MCF 10A (cell line): ENCODE measurements at regions of chr2 and their contacts with region 1.

Region 1: DNA sequence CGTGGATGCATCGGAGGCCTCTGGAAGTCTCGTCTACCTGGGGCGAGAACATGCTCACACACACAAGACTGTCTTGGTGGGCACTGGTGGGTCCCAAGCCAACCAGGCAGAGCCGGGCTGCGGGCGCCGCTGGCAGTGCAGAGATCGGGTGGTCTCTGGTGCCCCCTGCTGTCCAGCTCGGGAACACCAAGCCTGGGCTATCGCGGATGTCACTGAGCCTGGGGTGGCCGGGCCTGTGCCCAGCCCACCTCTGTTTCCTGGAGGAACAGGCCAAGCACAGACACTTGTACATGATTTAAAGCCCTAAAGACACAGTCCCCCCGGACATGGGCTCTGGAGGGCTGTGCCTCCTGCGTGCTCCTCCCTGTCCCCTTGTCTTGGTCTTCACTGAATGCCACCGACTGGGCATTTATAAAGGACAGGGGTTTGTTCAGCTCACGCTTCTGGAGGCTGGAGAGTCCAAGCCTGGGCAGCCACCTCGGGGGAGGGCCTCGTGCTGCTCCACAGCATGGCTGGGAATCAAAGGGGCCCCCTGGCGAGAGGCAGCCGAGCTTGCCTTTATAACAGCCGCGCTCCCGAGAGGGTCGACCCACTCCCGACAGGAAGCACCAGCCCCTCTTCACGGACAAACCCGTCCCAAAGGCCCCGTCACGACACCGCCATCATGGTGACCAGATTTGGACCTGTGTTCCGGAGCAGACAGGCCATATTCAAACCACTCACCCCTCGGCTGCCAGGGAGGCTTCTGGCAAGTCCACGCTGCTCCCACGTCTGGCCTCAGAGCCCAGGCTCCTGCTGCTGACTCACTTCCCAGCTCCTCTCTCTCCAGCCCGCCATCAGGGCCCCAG is 3.6 kb upstream of the OTOS start:
- DNase-seq: peak; percentile 50
- H3K4me3 Mint-ChIP-seq: no peak overlapping the region
- H3K27ac Mint-ChIP-seq: no peak overlapping the region
- H3K4me1 Mint-ChIP-seq: no peaks in the 10 kb centered on the region
- H3K27me3 Mint-ChIP-seq: peaks cover 24% of the 10 kb centered on the region
- CTCF ChIP-seq: peak; percentile 95

Region 2: DNA sequence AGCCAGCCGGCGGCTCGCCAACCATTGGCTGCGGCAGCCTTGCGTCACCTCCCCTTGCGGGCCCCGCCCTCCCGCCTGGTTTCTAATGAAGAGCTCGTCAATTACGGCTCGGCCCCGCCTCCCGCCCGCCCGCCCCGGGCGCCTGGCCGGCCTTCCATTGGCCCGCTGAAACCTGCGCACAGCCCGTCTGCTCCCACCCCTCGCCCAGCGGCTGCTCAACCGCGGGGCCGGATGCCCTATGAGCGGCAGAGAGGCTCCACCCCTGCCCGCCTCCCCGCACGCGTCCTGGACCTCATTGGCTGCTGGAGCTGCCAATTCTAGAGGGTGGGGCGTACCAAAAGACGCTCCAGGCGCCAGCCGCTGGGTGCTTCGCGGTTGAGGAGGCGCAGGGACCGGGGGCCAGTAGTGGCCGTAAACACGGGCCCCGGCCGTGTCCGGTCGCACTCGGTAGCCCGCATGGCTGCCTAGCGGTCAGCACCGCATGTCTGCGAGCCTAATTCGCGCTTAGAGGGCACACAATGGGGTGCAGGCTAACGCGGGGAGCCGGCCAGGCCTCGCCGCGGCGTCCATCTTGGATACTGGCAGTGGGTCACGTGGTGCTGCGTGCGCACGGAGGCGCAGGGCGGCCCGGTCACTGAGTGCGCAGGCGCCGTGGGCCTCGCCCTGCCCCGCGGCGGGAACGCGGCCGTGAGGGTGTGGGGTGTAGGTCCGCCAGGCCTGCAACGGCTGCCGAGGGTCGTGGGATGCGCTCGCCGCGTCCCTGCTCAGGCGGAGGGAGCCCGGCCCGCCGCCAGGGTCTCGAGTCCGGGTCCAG is 742.8 kb before region 1 on chr2:
- CTCF ChIA-PET with region 1: no interaction called
- POLR2A ChIA-PET with region 1: no interaction called
- intact Hi-C with region 1: no loop called
- DNase-seq: peak; percentile 98
- H3K4me3 Mint-ChIP-seq: peak overlapping the region; percentile 83
- H3K27ac Mint-ChIP-seq: peak overlapping the region; percentile 100
- H3K4me1 Mint-ChIP-seq: peaks cover 12% of the 10 kb centered on the region
- H3K27me3 Mint-ChIP-seq: no peaks in the 10 kb centered on the region
- CTCF ChIP-seq: no peak

Region 3: GRCh38 chr2:240060977-240061591 is 82.9 kb before region 1 on chr2:
- CTCF ChIA-PET with region 1: interaction called, 201 read pairs
- POLR2A ChIA-PET with region 1: interaction called, 10 read pairs
- intact Hi-C with region 1: loop called (anchors 1 kb)
- DNase-seq: peak; percentile 68
- H3K4me3 Mint-ChIP-seq: no peak overlapping the region
- H3K27ac Mint-ChIP-seq: no peak overlapping the region
- H3K4me1 Mint-ChIP-seq: no peaks in the 10 kb centered on the region
- H3K27me3 Mint-ChIP-seq: peaks cover 100% of the 10 kb centered on the region
- CTCF ChIP-seq: peak; percentile 66

Region 4: GRCh38 chr2:240069853-240070252 is 74.2 kb before region 1 on chr2:
- CTCF ChIA-PET with region 1: interaction called, 17 read pairs
- POLR2A ChIA-PET with region 1: no interaction called
- intact Hi-C with region 1: no loop called
- DNase-seq: peak; percentile 65
- H3K4me3 Mint-ChIP-seq: no peak overlapping the region
- H3K27ac Mint-ChIP-seq: no peak overlapping the region
- H3K4me1 Mint-ChIP-seq: peaks cover 8% of the 10 kb centered on the region
- H3K27me3 Mint-ChIP-seq: peaks cover 52% of the 10 kb centered on the region
- CTCF ChIP-seq: no peak

Region 5: DNA sequence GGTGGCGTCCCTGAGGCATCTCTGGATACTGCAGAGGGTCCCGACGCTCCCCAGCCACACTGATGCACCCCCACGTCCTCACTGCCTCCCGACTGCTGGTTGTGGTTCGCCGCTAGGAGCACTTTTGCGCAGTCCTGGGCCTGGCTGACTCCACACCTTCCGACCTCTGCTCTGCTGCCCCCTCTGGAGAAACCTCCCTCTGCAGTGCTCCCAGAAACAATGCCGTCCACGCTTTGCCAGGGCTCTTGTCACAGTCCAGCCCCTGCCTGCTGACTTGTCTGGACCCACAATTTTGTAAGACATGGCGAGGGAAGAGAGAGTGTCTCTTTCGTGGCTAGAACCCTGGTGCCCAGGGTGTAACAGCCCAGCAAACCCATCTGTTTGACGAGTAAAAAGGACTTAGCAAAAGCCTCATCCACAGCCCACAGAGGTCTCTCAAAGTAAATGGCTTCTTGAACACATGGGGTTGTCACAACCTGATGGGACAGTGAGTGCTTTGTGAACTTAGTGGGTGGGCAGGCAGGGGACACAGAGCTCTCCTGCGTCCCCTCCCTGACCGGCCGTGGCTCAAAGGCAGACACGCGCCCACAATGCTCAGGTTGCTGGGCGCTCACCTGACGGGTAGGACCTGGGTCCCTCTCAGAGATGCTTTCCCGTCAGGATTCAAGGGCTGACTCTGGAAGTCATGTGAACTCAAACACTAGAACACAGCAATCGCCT is 11.9 kb before region 1 on chr2:
- CTCF ChIA-PET with region 1: interaction called, 11 read pairs
- POLR2A ChIA-PET with region 1: no interaction called
- intact Hi-C with region 1: no loop called
- DNase-seq: no peak
- H3K4me3 Mint-ChIP-seq: no peak overlapping the region
- H3K27ac Mint-ChIP-seq: no peak overlapping the region
- H3K4me1 Mint-ChIP-seq: peaks cover 12% of the 10 kb centered on the region
- H3K27me3 Mint-ChIP-seq: no peaks in the 10 kb centered on the region
- CTCF ChIP-seq: peak; percentile 20